ENCODE measurements at regions of chr4 and their contacts with region 1.

Region 1: GRCh38 chr4:68375667-68376559 is 26.0 kb upstream of the YTHDC1 start:
- DNase-seq: peak; percentile 53
- H3K4me3 Mint-ChIP-seq: peak overlapping the region; percentile 78
- H3K27ac Mint-ChIP-seq: no peak overlapping the region
- H3K4me1 Mint-ChIP-seq: peaks cover 12% of the 10 kb centered on the region
- H3K27me3 Mint-ChIP-seq: no peaks in the 10 kb centered on the region
- CTCF ChIP-seq: peak; percentile 69

Region 2: GRCh38 chr4:68162196-68162595 is 213.7 kb before region 1 on chr4:
- CTCF ChIA-PET with region 1: no interaction called
- intact Hi-C with region 1: no loop called
- DNase-seq: no peak
- H3K4me3 Mint-ChIP-seq: no peak overlapping the region
- H3K27ac Mint-ChIP-seq: no peak overlapping the region
- H3K4me1 Mint-ChIP-seq: no peaks in the 10 kb centered on the region
- H3K27me3 Mint-ChIP-seq: no peaks in the 10 kb centered on the region
- CTCF ChIP-seq: no peak

Region 3: DNA sequence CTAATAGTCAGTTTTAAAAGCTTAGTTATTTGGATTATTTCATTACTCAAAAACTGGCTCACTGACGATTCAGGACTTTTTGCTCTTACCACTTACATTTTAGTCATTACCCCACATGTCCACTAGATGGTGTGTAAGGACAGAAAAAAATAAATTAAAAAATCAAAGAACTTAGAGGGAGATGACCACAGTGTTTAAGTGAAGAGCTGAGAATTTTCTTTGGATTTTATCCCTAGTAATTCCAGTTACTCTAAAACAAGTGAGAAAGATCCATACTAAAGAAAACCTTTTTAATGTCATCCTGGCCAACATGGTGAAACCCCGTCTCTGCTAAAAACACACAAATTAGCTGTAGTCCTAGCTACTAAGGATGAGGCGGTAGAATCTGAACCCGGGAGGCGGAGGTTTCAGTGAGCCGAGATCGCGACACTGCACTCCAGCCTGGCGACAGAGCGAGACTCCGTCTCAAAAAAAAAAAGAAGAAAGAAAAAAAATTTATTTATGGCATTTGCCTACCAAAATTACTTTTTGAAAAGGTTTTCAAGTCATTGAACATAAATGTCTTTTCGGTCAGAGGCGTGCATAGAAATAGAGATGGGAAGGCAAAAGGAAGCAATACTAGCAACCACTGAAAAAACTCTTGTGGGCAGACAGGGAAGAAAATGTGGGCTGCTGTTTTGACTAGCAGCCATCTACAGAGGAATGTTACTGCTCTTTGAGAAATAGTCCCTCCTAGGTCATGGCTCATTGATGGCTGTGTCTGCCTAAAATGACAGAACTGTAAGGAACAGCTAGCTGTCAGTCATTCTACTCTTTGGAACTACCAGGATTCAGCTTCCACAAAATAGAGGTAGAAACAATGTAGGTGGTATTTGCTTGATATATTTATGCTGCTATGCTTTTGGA is 103.8 kb before region 1 on chr4:
- CTCF ChIA-PET with region 1: interaction called, 24 read pairs
- intact Hi-C with region 1: loop called (anchors 1 kb)
- DNase-seq: peak; percentile 4
- H3K4me3 Mint-ChIP-seq: no peak overlapping the region
- H3K27ac Mint-ChIP-seq: peak overlapping the region; percentile 26
- H3K4me1 Mint-ChIP-seq: peaks cover 16% of the 10 kb centered on the region
- H3K27me3 Mint-ChIP-seq: no peaks in the 10 kb centered on the region
- CTCF ChIP-seq: peak; percentile 22

Region 4: GRCh38 chr4:68324519-68325262 is 51.2 kb before region 1 on chr4:
- CTCF ChIA-PET with region 1: no interaction called
- intact Hi-C with region 1: loop called (anchors 10 kb)
- DNase-seq: no peak
- H3K4me3 Mint-ChIP-seq: no peak overlapping the region
- H3K27ac Mint-ChIP-seq: no peak overlapping the region
- H3K4me1 Mint-ChIP-seq: no peaks in the 10 kb centered on the region
- H3K27me3 Mint-ChIP-seq: no peaks in the 10 kb centered on the region
- CTCF ChIP-seq: no peak

Measured in Calu3 (cell line).